ENCODE measurements at regions of chr19 and their contacts with region 1.

Region 1: DNA sequence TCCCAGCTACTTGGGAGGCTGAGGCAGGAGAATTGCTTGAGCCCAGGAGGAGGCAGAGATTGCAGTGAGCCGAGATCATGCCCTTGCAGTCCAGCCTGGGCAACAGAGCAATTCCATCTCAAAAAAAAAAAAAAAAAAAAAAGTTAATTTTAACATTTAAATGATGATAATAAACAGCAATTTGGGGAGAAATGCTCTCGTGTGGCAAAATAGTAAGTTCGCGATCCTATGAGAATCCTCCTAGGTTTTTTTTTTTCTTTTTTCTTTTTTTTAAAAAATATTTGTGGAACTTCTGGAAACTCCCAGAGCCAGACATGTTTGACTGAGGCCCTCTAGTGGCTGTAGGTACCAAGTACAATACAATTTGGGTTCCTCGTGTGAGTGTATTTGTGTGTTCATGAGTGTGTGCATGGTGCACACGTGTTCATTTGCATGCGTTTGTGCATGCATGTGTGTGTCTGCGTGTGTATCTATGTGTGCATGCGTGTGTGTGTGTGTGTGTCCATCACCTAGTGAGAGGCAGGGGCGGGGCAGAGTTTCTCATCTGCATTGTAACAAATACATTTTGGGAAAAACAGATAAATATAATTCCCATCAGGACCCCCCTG is 31.2 kb downstream of the TMPRSS9 start:
- DNase-seq: peak; percentile 21
- ATAC-seq: peak; percentile 50
- H3K4me3 ChIP-seq: no peak overlapping the region
- H3K27ac ChIP-seq: no peak overlapping the region
- H3K4me1 ChIP-seq: peaks cover 9% of the 10 kb centered on the region
- H3K27me3 ChIP-seq: no peaks in the 10 kb centered on the region; a peak in 1 of 4 replicates
- CTCF ChIP-seq: peak; percentile 73 to 82 (median 77)
- EP300 ChIP-seq: no peak
- POLR2A ChIP-seq: no peak
- RAD21 ChIP-seq: peak; percentile 91

Region 2: DNA sequence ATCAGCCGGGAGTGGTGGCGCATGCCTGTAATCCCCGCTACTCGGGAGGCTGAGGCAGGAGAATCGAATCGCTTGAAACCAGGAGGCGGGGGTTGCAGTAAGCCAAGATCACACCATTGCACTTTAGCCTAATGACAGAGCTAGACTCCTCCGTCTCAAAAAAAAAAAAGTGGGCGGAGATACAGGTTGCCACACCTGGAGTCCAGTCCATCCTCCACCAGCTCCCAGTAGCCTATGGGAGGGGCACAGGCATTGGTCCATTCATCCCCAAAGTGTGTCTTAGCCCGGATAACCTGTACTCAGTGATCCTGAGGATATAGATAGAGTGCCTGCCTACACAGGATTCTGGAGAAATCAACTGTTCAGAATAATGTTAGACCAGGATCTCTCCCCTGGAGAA is 230.8 kb before region 1 on chr19:
- CTCF ChIA-PET with region 1: interaction called, 25 read pairs
- POLR2A ChIA-PET with region 1: interaction called, 3 read pairs
- RAD21 ChIA-PET with region 1: interaction called, 29 read pairs
- SMC1A ChIA-PET with region 1: interaction called, 5 read pairs
- in situ Hi-C with region 1: no loop called
- intact Hi-C with region 1: loop called (anchors 5 kb)
- DNase-seq: no peak
- ATAC-seq: no peak
- H3K4me3 ChIP-seq: no peak overlapping the region
- H3K27ac ChIP-seq: no peak overlapping the region
- H3K4me1 ChIP-seq: no peaks in the 10 kb centered on the region; the same call in 1 of the 2 replicates
- H3K27me3 ChIP-seq: no peaks in the 10 kb centered on the region
- CTCF ChIP-seq: no peak
- EP300 ChIP-seq: no peak
- POLR2A ChIP-seq: no peak
- RAD21 ChIP-seq: no peak

Region 3: GRCh38 chr19:2236314-2237050 is 154.7 kb before region 1 on chr19 and contains the starts of genes PLEKHJ1 and SF3A2:
- CTCF ChIA-PET with region 1: interaction called, 27 read pairs
- POLR2A ChIA-PET with region 1: interaction called, 5 read pairs
- RAD21 ChIA-PET with region 1: interaction called, 7 read pairs
- SMC1A ChIA-PET with region 1: interaction called, 28 read pairs
- in situ Hi-C with region 1: no loop called
- intact Hi-C with region 1: loop called (anchors 5 kb)
- DNase-seq: peak; percentile 93
- ATAC-seq: peak; percentile 83
- H3K4me3 ChIP-seq: peak within 1 kb of the TSS; percentile 99
- H3K27ac ChIP-seq: peak within 1 kb of the TSS; percentile 94
- H3K4me1 ChIP-seq: peaks cover 24% of the 10 kb centered on the region
- H3K27me3 ChIP-seq: no peaks in the 10 kb centered on the region
- CTCF ChIP-seq: peak; percentile 99 to 100 (median 99); a peak in 5 of 6 replicates
- EP300 ChIP-seq: no peak
- POLR2A ChIP-seq: peak; percentile 93
- RAD21 ChIP-seq: peak; percentile 94
- polyA plus RNA-seq, gene PLEKHJ1: 1.3 to 6.9 TPM
- polyA plus RNA-seq, gene SF3A2: 0.33 to 0.55 TPM

Region 4: GRCh38 chr19:2274931-2275535 is 116.2 kb before region 1 on chr19:
- CTCF ChIA-PET with region 1: interaction called, 40 read pairs
- POLR2A ChIA-PET with region 1: interaction called, 6 read pairs
- RAD21 ChIA-PET with region 1: interaction called, 4 read pairs
- SMC1A ChIA-PET with region 1: interaction called, 10 read pairs
- in situ Hi-C with region 1: no loop called
- intact Hi-C with region 1: loop called (anchors 5 kb)
- DNase-seq: no peak
- ATAC-seq: no peak
- H3K4me3 ChIP-seq: no peak overlapping the region
- H3K27ac ChIP-seq: no peak overlapping the region
- H3K4me1 ChIP-seq: peaks cover 7% of the 10 kb centered on the region
- H3K27me3 ChIP-seq: no peaks in the 10 kb centered on the region
- CTCF ChIP-seq: peak; percentile 43 to 67 (median 57); a peak in 5 of 6 replicates
- EP300 ChIP-seq: no peak
- POLR2A ChIP-seq: peak; percentile 36
- RAD21 ChIP-seq: peak; percentile 70

Region 5: DNA sequence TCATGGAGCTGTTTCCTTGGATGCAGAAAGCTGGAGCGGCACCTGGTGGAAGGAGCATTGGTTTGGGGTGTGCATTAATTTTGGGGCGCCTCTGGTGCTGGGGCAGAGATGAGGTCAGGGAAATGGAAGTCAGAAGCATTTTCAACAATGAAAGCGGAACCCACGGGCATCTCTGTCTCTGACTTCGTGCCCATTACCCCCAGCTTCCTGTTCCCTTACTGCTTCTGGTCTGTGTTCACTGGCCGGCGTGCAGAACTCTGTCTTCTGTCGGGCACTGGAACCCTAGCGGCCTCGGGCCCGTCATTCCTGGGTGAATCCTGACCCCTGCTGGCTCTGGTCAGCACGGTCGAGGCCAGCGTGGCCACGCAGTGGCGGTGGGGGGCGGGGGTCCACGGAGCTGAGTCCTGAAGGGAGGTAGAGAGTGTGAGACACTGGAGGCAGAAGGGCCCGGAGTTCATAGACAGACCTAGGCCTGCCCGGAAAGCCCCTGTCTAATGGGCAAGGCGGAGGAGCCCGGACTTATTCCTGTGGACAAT is 75.3 kb before region 1 on chr19:
- CTCF ChIA-PET with region 1: interaction called, 9 read pairs
- POLR2A ChIA-PET with region 1: no interaction called
- RAD21 ChIA-PET with region 1: interaction called, 11 read pairs
- SMC1A ChIA-PET with region 1: interaction called, 3 read pairs
- in situ Hi-C with region 1: no loop called
- intact Hi-C with region 1: no loop called
- DNase-seq: no peak
- ATAC-seq: peak; percentile 90
- H3K4me3 ChIP-seq: no peak overlapping the region
- H3K27ac ChIP-seq: no peak overlapping the region
- H3K4me1 ChIP-seq: peaks cover 3% of the 10 kb centered on the region; the same call in 1 of the 2 replicates
- H3K27me3 ChIP-seq: no peaks in the 10 kb centered on the region
- CTCF ChIP-seq: peak; percentile 43 to 61 (median 53); a peak in 4 of 6 replicates
- EP300 ChIP-seq: no peak
- POLR2A ChIP-seq: no peak
- RAD21 ChIP-seq: peak; percentile 74

Region 6: GRCh38 chr19:2408247-2408646 is 17.0 kb after region 1 on chr19:
- CTCF ChIA-PET with region 1: interaction called, 17 read pairs
- POLR2A ChIA-PET with region 1: no interaction called
- RAD21 ChIA-PET with region 1: interaction called, 5 read pairs
- SMC1A ChIA-PET with region 1: interaction called, 4 read pairs
- in situ Hi-C with region 1: no loop called
- intact Hi-C with region 1: no loop called
- DNase-seq: no peak
- ATAC-seq: no peak
- H3K4me3 ChIP-seq: no peak overlapping the region
- H3K27ac ChIP-seq: no peak overlapping the region
- H3K4me1 ChIP-seq: no peaks in the 10 kb centered on the region
- H3K27me3 ChIP-seq: no peaks in the 10 kb centered on the region
- CTCF ChIP-seq: no peak
- EP300 ChIP-seq: no peak
- POLR2A ChIP-seq: peak; percentile 18; the same call in 1 of the 2 replicates
- RAD21 ChIP-seq: no peak